ENCODE measurements at regions of chr7 and their contacts with region 1.

Region 1: DNA sequence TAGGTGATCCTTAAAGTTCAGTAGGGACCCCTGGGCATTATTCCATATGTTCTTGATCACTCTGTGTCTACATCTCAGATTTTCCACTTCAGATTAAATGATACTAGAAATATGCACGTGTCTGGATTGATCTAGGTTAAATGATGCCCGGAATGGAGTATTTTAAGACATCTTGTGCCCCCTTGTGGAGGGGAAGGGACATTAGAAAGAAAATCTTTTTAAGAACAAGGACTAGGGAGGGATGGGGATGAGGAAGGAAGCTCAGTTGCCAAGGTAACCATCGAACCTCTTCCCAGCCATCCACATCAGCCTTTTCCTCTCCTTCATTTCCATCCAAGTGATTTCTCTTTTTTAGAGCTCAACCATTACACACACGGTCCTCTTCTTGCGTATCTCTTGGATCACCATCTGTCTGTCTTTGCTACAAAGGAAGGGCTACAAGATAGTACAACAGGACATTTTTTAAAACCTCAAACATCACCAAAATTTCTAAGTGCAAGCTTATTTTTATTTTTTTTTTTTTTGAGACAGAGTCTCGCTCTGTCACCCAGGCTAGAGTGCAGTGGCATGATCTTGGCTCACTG is 40.5 kb downstream of the PRSS2 start:
- DNase-seq: no peak
- CTCF ChIP-seq: peak; percentile 71

Region 2: DNA sequence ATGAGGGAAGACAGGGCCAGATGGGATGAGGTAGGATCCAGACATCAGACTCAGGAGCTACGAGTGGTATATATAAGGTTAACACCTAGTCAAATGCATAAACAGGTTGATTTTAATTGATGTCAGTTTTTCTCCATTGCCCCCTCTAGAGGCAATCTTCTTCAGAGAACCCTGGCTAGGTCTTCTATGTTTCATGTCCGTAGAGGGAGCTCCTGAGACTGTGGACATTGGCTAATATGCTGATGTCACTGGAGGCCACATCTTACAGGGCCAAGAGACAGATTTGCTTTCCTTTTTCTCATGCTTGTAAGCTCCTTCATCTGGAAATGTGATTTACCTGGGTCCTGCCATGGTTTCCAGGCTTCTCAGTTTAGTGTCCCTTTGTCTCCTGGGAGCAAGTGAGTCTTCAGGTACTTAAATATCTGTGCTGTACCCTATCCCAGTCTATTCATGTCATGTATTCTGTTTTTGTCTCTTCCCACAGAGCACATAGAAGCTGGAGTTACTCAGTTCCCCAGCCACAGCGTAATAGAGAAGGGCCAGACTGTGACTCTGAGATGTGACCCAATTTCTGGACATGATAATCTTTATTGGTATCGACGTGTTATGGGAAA is 223.6 kb before region 1 on chr7:
- CTCF ChIA-PET with region 1: interaction called, 13 read pairs
- POLR2A ChIA-PET with region 1: interaction called, 4 read pairs
- DNase-seq: peak; percentile 71
- CTCF ChIP-seq: peak; percentile 72

Region 3: DNA sequence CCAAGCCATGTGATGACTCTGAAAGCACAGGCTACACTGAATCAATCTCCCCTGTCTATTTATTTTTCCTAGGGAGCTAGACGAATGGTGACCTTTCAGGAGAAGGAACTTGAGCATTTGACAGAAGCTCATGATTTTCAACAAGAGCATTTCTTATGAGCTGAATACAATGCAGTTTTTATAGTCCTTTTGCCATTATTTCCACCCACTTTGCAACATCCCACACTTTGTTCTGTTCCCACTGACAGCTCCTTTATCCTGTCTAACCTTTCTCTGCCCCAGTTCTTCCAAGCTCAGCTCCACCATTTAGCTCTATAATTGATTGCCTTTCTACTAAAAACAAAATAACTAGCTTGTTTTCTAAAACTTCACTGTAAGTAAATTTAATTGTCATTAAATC is 153.9 kb before region 1 on chr7:
- CTCF ChIA-PET with region 1: interaction called, 10 read pairs
- POLR2A ChIA-PET with region 1: no interaction called
- DNase-seq: no peak
- CTCF ChIP-seq: no peak

Region 4: GRCh38 chr7:142771353-142771723 is 39.9 kb before region 1 on chr7:
- CTCF ChIA-PET with region 1: interaction called, 18 read pairs
- POLR2A ChIA-PET with region 1: no interaction called
- DNase-seq: no peak
- CTCF ChIP-seq: no peak

Region 5: DNA sequence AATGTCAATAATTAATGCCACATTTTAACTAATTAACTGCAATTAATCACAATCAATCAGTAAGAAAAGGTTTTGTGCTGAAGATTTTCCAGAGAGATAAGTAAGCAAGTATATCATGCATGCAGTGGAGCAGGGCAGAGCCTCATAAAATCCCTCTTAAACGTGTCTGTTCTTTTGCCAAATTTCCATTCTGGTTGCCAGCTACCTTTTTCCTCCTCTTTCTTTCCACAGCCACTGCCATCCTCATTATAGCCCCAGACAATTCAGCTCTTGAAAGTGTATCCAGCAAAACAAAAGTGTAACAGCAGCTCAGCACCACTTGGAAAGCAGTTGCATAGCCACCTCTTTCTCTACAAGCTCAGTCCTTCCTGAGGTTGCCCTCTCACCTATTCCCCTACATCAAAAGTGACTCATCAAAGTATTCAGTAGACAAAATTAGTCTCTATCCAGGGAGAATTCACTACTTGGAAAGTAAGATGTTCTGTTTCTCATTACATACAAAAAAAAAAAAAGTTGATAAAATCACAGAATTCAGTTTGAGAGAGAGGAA is 16.8 kb after region 1 on chr7:
- CTCF ChIA-PET with region 1: interaction called, 22 read pairs
- POLR2A ChIA-PET with region 1: no interaction called
- DNase-seq: no peak
- CTCF ChIP-seq: no peak

Measured in GM10248 (cell line).